Activated CD4-positive, alpha-beta T cell treated with anti-CD3 and anti-CD28 coated beads for 36 hours (primary cell): ENCODE measurements at regions of chr1 and their contacts with region 1.

Region 1: GRCh38 chr1:171566467-171566866 is 55.6 kb upstream of the MYOCOS start:
- DNase-seq: no peak
- ATAC-seq: no peak
- H3K4me3 Mint-ChIP-seq: no peak overlapping the region
- H3K27ac Mint-ChIP-seq: no peak overlapping the region
- H3K4me1 Mint-ChIP-seq: peaks cover 12% of the 10 kb centered on the region
- H3K27me3 Mint-ChIP-seq: no peaks in the 10 kb centered on the region

Region 2: DNA sequence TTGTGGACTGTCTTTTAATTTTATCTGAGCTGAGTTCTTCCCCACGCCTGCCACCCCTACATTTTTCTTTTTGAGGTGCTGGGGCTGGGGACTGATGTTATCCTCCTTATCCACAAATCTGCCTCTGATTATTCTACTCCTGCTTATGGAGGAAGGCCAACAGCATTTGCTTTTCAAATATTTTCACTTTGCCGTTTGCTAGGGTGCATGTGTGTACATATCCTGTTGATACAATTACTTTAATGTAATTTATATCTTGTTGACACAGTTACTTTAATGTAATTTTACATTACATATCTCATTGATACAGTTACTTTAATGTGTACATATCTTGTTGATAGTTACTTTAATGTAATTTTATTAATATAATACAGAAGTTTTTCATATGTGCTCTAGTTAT is 44.9 kb before region 1 on chr1:
- CTCF ChIA-PET with region 1: interaction called, 3 read pairs
- POLR2A ChIA-PET with region 1: no interaction called
- intact Hi-C with region 1: loop called in 1 of 2 experiments (anchors 5 kb)
- DNase-seq: no peak
- ATAC-seq: no peak
- H3K4me3 Mint-ChIP-seq: no peak overlapping the region
- H3K27ac Mint-ChIP-seq: no peak overlapping the region
- H3K4me1 Mint-ChIP-seq: no peaks in the 10 kb centered on the region
- H3K27me3 Mint-ChIP-seq: no peaks in the 10 kb centered on the region